Activated CD4-positive, alpha-beta memory T cell treated with anti-CD3 and anti-CD28 coated beads, Interleukin-2, amount 10 ng/mL, durations not matched to agents 7 days and 5 days (primary cell): ENCODE measurements at regions of chr22 and their contacts with region 1.

Region 1: DNA sequence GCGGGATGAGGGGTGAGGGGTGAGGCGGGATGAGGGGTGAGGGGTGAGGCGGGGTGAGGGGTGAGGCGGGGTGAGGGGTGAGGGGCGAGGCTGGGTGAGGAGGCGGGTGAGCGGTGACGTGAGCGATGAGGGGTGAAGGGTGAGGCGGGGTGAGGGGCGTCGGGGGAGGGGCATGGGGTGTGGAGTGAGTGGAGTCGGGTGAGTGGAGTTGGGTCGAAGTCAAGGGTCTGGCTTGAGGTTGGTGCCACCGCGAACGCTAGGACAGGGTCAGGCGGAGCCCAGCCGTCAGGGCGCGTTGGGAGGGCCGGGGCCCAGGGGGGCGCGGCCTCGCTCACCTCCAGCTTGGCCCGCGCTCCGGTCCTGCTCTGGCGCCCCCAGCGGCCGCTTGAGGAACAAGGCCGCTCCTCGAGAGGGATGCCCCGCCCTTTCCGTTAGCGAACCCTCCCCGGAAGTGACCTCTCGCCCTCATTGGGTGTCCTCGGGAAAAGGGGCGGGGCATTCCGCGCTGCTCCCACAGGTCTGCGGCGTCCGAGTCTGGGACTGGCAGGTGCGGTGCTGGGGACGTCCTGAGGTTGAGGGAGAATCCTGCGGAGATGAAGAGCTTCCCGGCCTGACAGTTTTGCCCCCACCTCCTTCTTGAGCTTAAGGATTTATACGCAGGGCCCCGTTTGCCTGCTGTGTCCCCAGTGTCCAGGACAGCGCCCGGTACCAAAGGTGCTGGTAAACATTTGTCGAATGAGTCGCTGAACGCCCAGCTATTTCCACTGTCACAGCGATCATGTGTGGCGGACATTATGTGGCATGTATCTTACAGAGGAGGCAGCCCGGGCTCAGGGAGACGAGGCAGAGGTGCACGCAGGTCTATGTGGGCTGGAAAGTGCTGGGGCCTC is at the start of gene SYCE3:
- DNase-seq: peak; percentile 98
- H3K4me3 Mint-ChIP-seq: peak within 1 kb of the TSS; percentile 77
- H3K27ac Mint-ChIP-seq: peak within 1 kb of the TSS; percentile 48
- H3K4me1 Mint-ChIP-seq: peaks cover 26% of the 10 kb centered on the region
- H3K27me3 Mint-ChIP-seq: peaks cover 25% of the 10 kb centered on the region
- total RNA-seq, gene SYCE3: 0.58 to 0.71 TPM

Region 2: DNA sequence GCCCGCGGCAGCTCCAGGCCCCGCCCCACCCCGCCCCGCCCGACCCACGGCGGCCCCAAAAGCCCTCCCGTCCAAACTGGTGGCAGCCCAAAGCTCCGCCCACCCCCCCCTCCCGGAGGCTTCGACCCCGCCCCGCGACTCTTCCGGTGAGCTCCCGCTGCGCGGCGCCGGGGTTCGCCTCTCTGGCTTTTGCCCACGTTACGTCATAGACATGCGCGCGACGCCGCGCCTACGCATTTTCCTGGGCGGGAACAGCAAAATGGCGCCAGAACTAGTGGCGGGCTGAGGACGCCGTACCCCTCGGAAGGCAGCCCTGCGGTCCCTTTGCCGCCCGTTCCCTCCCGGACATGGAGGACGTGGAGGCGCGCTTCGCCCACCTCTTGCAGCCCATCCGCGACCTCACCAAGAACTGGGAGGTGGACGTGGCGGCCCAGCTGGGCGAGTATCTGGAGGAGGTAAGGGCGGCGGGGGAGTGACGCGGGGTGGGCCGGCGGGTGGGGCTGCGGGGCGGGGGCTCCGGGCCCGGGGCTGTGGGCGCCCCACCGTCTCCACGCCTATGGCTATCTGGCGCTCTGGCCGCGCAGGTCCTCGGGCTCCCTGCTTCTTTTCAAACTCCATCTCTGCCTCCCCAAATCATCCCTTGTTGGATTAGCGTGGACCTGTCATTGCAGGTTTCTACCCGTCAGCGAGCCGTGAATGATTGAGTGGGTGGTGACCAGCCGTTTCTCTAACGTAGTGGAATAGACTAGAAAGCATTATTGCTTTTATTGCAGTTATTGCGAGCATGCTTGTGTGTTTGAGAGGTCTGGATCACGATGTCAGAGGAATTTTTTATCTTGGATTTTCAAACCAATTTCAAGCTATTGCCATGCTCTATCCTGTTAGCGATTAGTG is 54.5 kb before region 1 on chr22 and contains the start of gene NCAPH2:
- CTCF ChIA-PET with region 1: no interaction called
- POLR2A ChIA-PET with region 1: interaction called, 13 read pairs
- DNase-seq: peak; percentile 98
- H3K4me3 Mint-ChIP-seq: peak within 1 kb of the TSS; percentile 96
- H3K27ac Mint-ChIP-seq: peak within 1 kb of the TSS; percentile 95
- H3K4me1 Mint-ChIP-seq: peaks cover 36% of the 10 kb centered on the region
- H3K27me3 Mint-ChIP-seq: no peaks in the 10 kb centered on the region
- total RNA-seq, gene NCAPH2: 105 to 108 TPM

Region 3: DNA sequence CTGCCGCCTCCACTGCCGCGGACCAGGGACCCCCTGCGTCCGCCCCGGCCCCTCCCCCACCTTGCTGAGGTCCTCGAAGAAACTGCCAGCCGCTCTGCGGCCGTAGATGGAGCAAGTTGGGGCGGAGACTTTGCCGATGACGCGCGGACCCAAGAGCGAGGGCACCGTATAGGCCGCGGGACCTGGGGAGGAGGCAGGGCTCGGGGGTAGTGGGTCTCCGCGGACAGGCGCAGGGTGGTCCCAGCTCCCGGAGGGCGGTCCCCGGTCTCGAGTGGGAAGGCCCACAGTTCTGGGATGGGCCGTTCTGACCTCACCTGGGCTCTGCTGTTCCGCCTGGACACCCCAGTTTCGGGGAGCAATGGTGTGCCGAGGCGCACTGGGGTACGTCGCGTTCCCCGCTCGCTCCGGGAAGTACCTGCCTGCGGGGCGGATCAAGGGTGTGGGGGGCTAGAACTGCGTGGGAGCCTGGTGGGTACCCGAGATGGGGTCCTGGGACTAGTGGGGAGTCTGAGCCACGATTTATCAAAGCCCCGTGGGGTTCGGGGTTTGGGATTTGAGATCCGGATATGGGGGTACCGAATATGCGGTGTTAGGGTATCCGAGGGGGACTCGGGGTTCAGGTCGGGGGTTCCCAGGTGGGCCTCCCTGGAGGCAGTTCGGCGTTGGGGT is 31.8 kb before region 1 on chr22:
- CTCF ChIA-PET with region 1: interaction called, 42 read pairs
- POLR2A ChIA-PET with region 1: interaction called, 109 read pairs
- DNase-seq: peak; percentile 90
- H3K4me3 Mint-ChIP-seq: peak overlapping the region; percentile 95
- H3K27ac Mint-ChIP-seq: peak overlapping the region; percentile 98
- H3K4me1 Mint-ChIP-seq: peaks cover 53% of the 10 kb centered on the region
- H3K27me3 Mint-ChIP-seq: no peaks in the 10 kb centered on the region

Region 4: GRCh38 chr22:50537765-50538164 is 25.0 kb before region 1 on chr22:
- CTCF ChIA-PET with region 1: interaction called, 14 read pairs
- POLR2A ChIA-PET with region 1: interaction called, 27 read pairs
- DNase-seq: no peak
- H3K4me3 Mint-ChIP-seq: peak overlapping the region; percentile 33
- H3K27ac Mint-ChIP-seq: peak overlapping the region; percentile 99
- H3K4me1 Mint-ChIP-seq: peaks cover 83% of the 10 kb centered on the region
- H3K27me3 Mint-ChIP-seq: no peaks in the 10 kb centered on the region

Region 5: DNA sequence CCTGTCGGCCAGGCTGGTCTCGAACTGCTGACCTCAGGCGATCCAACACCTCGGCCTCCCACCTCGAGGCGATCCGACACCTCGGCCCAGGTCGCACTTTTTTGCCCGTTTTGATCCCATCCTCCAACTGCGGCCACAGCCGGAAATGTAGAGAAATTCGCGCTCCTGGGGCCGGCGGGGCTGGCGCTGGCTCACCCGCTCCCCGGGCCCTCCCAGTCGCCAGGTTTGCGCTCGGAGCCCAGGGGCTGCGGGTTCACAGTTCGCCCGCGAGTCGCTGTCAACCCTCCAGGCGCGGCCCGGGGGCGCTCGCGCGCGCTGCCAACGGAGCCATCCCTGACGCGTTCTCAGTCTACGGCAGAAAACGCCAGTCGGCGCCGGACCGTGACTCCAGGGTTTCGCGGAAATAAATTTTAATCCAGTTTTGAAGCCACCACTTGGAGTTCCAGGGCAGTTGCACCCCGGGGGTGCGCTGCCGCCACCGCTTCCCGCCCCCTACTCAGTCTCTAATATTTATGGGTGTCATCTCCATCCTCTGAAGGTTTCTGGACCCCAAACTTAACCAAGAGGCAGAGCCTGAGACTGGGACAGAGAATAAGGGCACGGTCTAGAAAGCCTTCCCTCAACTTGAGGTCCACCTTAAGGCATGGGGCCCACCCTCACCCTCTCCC is 18.6 kb before region 1 on chr22:
- CTCF ChIA-PET with region 1: interaction called, 48 read pairs
- POLR2A ChIA-PET with region 1: interaction called, 31 read pairs
- DNase-seq: peak; percentile 90
- H3K4me3 Mint-ChIP-seq: peak overlapping the region; percentile 63
- H3K27ac Mint-ChIP-seq: peak overlapping the region; percentile 75
- H3K4me1 Mint-ChIP-seq: peaks cover 63% of the 10 kb centered on the region
- H3K27me3 Mint-ChIP-seq: no peaks in the 10 kb centered on the region

Region 6: DNA sequence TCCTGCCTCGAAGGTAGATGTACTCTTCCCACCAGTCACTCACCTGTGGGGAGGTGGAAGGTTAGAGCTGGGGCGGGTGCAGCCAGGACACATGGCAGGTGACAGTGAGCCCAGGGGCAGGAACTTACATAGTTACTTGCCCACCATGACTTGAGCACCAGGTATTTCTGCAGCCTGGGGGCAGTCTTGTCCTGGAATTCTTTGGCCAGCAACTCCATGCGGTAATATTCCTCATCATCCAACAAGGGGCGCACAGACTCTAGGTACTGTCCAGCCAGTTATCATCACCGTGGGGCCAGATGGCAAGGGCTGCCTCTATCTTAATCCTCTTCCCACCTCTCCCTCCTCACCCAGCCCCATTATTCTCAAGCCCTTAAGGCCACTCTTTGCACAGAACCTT is 13.3 kb after region 1 on chr22:
- CTCF ChIA-PET with region 1: interaction called, 18 read pairs
- POLR2A ChIA-PET with region 1: interaction called, 29 read pairs
- DNase-seq: no peak
- H3K4me3 Mint-ChIP-seq: no peak overlapping the region
- H3K27ac Mint-ChIP-seq: no peak overlapping the region
- H3K4me1 Mint-ChIP-seq: peaks cover 27% of the 10 kb centered on the region
- H3K27me3 Mint-ChIP-seq: no peaks in the 10 kb centered on the region

Region 7: GRCh38 chr22:50582562-50583293 is 20.0 kb after region 1 on chr22 and contains the start of gene CHKB:
- CTCF ChIA-PET with region 1: interaction called, 18 read pairs
- POLR2A ChIA-PET with region 1: interaction called, 29 read pairs
- DNase-seq: peak; percentile 99
- H3K4me3 Mint-ChIP-seq: peak within 1 kb of the TSS; percentile 81
- H3K27ac Mint-ChIP-seq: peak within 1 kb of the TSS; percentile 93
- H3K4me1 Mint-ChIP-seq: peaks cover 34% of the 10 kb centered on the region
- H3K27me3 Mint-ChIP-seq: no peaks in the 10 kb centered on the region
- total RNA-seq, gene CHKB: 101 to 111 TPM